ENCODE measurements at regions of chr2 and their contacts with region 1.

Region 1: DNA sequence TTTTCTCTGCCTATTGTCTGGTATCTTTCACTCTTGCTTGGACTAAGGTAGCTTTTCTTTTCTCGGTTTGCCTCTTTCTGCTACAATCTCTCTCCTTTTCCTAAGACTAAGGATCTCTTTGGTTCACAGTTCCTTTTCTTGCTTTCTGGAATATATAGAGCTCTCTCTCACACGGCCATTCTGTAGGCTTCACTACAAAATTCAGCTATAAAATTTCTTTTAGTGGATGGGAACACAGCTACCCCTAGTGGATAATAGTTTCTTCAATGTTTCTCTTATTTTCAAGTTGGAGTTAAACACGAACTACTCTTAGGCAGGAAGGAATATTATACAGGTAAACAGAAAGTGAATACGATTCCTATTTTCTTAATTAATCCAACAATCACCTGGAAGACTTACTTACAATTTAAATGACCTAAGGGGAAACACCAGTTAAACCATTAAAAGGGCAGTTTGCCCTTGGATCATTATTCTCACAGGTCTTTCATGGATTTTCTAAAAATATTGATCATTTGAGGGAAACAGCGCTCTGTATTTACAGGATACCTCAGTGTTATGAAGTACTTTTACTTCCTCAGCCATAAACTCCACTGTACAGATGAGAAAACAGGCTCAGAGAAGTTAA is 140.5 kb downstream of the LRP2 start:
- DNase-seq: peak; percentile 42
- H3K4me3 Mint-ChIP-seq: no peak overlapping the region
- H3K27ac Mint-ChIP-seq: no peak overlapping the region
- H3K4me1 Mint-ChIP-seq: no peaks in the 10 kb centered on the region
- H3K27me3 Mint-ChIP-seq: no peaks in the 10 kb centered on the region
- CTCF ChIP-seq: peak; percentile 41

Region 2: DNA sequence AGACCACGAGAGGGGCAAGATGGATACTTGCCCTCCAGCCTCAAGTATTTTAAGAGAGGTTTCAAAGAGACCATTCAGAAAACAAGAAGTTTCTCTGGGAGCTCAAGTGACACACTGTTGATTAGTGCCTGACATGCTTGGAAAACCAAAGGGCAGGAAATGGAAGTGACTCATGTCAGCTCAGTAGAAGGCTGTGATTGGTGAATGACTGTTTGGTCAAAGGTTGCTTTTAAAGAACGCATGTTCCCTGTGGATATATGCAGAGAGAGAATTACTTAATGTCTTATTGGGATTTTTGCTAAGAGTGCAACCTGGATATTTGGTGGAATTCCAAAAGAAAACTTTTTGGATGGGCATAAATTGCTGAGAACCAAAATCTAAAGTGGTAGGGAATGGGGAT is 1783.7 kb before region 1 on chr2:
- CTCF ChIA-PET with region 1: no interaction called
- POLR2A ChIA-PET with region 1: no interaction called
- intact Hi-C with region 1: no loop called
- DNase-seq: peak; percentile 40
- H3K4me3 Mint-ChIP-seq: no peak overlapping the region
- H3K27ac Mint-ChIP-seq: no peak overlapping the region
- H3K4me1 Mint-ChIP-seq: no peaks in the 10 kb centered on the region
- H3K27me3 Mint-ChIP-seq: no peaks in the 10 kb centered on the region
- CTCF ChIP-seq: no peak

Region 3: DNA sequence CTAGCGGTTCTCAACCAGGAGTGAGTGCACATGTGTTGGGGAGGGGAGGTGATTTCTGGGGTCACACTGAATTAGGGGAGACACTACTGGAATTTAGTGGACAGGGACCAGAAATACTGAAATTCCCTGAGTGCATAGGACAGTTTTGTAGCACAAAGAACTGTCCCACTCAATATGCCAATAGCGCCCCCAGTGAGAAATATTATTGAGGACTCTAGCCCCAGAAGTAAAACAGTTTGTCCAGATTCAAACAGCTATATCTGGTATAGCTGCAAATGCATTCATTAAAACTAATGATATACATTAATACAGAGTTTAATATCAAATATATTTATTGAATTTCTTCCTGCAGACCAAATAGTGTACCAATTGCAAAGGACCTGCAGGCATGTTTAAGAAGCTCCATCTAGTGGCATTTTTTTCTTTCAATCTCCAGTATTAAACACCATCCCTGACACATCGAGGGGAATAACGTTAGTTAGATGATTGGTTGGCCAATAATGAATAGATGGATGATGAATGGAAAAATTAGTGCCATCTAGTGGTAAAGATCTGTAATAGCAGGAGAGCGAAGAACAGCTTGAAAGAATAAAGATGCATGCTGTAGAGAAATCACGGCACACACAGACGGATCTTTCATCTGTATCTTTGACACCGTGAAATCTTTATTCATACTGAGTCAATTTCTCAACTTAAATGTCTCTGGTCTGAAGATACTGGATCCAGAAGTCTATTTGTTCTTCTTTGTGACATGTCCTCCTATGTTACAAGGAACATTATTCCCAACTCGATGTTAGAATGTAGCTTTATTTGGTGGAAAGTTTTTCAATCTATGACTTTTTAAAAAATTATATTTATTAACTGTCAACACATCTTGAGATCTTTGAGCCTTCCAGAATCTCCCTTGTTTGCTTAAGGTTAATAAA is 90.0 kb before region 1 on chr2:
- CTCF ChIA-PET with region 1: interaction called, 13 read pairs
- POLR2A ChIA-PET with region 1: interaction called, 3 read pairs
- intact Hi-C with region 1: no loop called
- DNase-seq: peak; percentile 78
- H3K4me3 Mint-ChIP-seq: no peak overlapping the region
- H3K27ac Mint-ChIP-seq: no peak overlapping the region
- H3K4me1 Mint-ChIP-seq: no peaks in the 10 kb centered on the region
- H3K27me3 Mint-ChIP-seq: no peaks in the 10 kb centered on the region
- CTCF ChIP-seq: peak; percentile 73

Region 4: DNA sequence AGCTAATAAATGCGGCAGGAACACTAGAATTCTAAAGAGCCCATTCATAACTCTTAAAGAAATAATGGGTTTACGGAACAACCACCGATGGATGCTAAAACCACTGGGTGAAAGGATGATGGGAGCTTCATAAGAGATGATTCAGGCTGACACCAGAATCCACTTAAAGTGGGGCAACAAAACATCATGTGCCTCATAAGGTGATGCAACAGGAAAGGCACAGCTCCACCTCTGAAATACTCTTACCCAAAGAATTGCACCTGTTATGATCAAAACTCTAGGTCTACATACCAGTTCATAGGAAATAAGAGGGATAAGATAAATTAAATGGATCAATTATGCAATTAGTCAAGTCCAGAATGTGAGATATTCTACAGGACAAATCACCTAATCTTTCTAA is 21.1 kb before region 1 on chr2:
- CTCF ChIA-PET with region 1: interaction called, 12 read pairs
- POLR2A ChIA-PET with region 1: interaction called, 3 read pairs
- intact Hi-C with region 1: no loop called
- DNase-seq: peak; percentile 2
- H3K4me3 Mint-ChIP-seq: no peak overlapping the region
- H3K27ac Mint-ChIP-seq: no peak overlapping the region
- H3K4me1 Mint-ChIP-seq: no peaks in the 10 kb centered on the region
- H3K27me3 Mint-ChIP-seq: peaks cover 74% of the 10 kb centered on the region
- CTCF ChIP-seq: no peak

Region 5: GRCh38 chr2:169208026-169208425 is 13.8 kb before region 1 on chr2:
- CTCF ChIA-PET with region 1: interaction called, 40 read pairs
- POLR2A ChIA-PET with region 1: interaction called, 3 read pairs
- intact Hi-C with region 1: no loop called
- DNase-seq: no peak
- H3K4me3 Mint-ChIP-seq: no peak overlapping the region
- H3K27ac Mint-ChIP-seq: no peak overlapping the region
- H3K4me1 Mint-ChIP-seq: no peaks in the 10 kb centered on the region
- H3K27me3 Mint-ChIP-seq: peaks cover 34% of the 10 kb centered on the region
- CTCF ChIP-seq: no peak

Region 6: GRCh38 chr2:170680172-170680941 is 1458.5 kb after region 1 on chr2:
- CTCF ChIA-PET with region 1: no interaction called
- POLR2A ChIA-PET with region 1: no interaction called
- intact Hi-C with region 1: no loop called
- DNase-seq: no peak
- H3K4me3 Mint-ChIP-seq: no peak overlapping the region
- H3K27ac Mint-ChIP-seq: no peak overlapping the region
- H3K4me1 Mint-ChIP-seq: no peaks in the 10 kb centered on the region
- H3K27me3 Mint-ChIP-seq: no peaks in the 10 kb centered on the region
- CTCF ChIP-seq: no peak